BJ (cell line): ENCODE measurements at regions of chr2 and their contacts with region 1.

Region 1: GRCh38 chr2:70616168-70616694 is 62.6 kb upstream of the TGFA start:
- DNase-seq: no peak
- H3K4me3 ChIP-seq: no peak overlapping the region
- H3K27me3 ChIP-seq: peaks cover 5% of the 10 kb centered on the region
- CTCF ChIP-seq: no peak

Region 2: DNA sequence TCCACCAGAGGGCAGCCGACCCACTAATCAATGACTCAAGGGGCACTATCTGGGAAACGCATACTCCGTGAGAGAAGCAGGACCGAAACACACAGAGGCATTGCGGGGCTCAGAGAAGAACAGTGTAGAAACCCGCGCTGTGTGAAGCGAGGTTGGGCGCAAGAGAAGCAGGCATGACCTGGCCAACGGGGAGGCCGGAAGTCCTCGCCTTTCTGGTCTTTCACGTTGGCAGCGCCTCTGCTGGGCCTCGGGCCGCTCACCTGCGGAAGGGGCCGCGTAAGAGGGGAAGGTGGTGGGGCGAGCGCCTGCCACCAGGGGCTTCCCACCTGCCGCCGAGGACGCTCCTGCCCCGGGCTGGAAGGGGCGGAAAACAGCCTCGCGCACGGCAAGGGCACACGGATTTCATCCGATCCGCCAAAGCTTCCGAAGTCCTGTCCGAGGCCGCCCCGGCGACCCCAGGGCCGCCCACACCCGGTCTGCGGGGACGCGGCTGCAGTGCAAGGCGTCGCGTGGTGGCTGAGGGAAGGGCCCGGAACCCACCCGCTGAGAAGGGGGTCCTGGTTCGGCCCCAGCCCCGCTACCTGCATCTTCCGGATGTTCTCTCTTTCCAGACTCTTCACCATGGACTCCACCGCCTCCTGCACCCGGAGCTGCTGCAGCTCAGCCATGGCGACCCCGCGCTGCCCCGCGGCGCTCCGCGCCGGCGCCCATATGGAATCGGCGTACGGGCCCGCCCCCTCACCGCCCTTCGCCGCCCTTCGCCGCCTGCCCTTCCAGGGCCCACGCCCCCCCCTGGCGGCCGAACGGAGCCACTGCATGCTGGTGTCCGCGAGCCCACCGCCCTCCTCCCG is 314.7 kb before region 1 on chr2 and contains the start of gene FAM136A:
- CTCF ChIA-PET with region 1: interaction called, 89 read pairs
- POLR2A ChIA-PET with region 1: no interaction called
- DNase-seq: no peak
- H3K4me3 ChIP-seq: peak within 1 kb of the TSS; percentile 97
- H3K27me3 ChIP-seq: no peaks in the 10 kb centered on the region
- CTCF ChIP-seq: peak; percentile 87
- polyA plus RNA-seq, gene FAM136A: 22.9 and 28.3 TPM in 2 replicates

Region 3: GRCh38 chr2:70456585-70457495 is 159.4 kb before region 1 on chr2:
- CTCF ChIA-PET with region 1: no interaction called
- POLR2A ChIA-PET with region 1: interaction called, 11 read pairs
- DNase-seq: no peak
- H3K4me3 ChIP-seq: no peak overlapping the region
- H3K27me3 ChIP-seq: no peaks in the 10 kb centered on the region; the same call in 1 of the 2 replicates
- CTCF ChIP-seq: no peak

Region 4: GRCh38 chr2:70523996-70524965 is 92.0 kb before region 1 on chr2:
- CTCF ChIA-PET with region 1: no interaction called
- POLR2A ChIA-PET with region 1: no interaction called
- DNase-seq: peak; percentile 41
- H3K4me3 ChIP-seq: no peak overlapping the region
- H3K27me3 ChIP-seq: no peaks in the 10 kb centered on the region
- CTCF ChIP-seq: no peak

Region 5: DNA sequence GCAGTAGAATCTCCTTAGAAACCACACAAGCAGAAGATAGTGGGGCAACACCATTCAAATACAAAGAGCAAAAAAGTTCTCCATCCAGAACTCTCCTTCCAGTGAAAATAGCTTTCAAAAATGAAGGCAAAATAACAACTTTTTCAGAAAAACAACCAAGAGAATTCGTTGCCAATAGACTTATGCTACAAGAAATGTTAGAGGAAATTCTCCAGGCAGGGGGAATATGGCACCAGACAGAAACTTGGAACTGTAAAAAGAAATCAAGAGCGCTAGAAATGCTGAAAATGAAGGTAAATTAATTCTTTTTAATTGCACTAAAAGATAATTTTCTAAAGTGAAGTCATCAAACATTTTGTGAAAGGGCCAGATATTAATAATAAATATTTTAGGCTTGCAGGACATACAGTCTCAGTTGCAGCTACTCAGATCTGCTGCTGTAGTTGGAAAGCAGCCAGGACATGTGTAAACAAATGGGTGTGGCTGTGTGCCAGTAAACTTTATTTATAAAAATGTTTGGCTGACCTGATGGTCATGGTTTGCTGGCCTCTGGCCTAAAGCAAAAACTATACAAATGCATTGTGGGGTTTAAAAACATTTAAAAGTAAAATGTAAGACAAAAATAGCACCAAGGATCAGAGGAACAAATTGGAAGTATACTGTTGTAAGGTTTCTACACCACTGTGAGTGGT is 11.1 kb after region 1 on chr2:
- CTCF ChIA-PET with region 1: interaction called, 14 read pairs
- POLR2A ChIA-PET with region 1: no interaction called
- DNase-seq: no peak
- H3K4me3 ChIP-seq: no peak overlapping the region
- H3K27me3 ChIP-seq: peaks cover 6% of the 10 kb centered on the region
- CTCF ChIP-seq: no peak

Region 6: DNA sequence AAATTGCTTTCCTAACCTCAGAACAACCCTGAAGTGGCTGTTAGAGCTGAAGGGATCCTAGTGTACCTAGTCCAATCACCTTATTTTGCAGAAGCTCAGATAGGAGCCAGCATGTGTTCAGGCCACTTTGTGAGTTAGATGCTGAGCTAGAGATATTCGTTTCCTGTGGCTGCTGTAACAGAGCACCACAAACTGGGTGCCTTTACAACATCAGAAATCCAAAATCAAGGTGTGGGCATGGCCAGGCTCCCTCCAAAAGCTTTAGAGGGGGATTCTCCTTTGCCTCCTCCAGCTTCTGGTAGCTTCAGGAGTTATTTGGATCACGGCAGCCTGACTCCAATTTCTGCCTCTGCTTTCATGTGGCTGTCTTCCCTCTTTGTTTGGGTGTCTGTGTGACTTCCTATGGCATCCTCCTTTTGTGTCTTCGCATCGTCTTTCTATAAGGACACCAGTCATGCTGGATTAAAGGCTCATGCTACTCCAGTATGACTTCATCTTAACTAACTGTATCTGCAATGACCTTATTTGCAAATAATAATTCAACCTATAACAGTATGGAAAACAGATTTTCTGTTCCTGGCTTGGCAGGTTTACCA is 23.7 kb after region 1 on chr2:
- CTCF ChIA-PET with region 1: interaction called, 32 read pairs
- POLR2A ChIA-PET with region 1: no interaction called
- DNase-seq: no peak
- H3K4me3 ChIP-seq: no peak overlapping the region
- H3K27me3 ChIP-seq: peaks cover 3% of the 10 kb centered on the region; the same call in 1 of the 2 replicates
- CTCF ChIP-seq: no peak

Region 7: DNA sequence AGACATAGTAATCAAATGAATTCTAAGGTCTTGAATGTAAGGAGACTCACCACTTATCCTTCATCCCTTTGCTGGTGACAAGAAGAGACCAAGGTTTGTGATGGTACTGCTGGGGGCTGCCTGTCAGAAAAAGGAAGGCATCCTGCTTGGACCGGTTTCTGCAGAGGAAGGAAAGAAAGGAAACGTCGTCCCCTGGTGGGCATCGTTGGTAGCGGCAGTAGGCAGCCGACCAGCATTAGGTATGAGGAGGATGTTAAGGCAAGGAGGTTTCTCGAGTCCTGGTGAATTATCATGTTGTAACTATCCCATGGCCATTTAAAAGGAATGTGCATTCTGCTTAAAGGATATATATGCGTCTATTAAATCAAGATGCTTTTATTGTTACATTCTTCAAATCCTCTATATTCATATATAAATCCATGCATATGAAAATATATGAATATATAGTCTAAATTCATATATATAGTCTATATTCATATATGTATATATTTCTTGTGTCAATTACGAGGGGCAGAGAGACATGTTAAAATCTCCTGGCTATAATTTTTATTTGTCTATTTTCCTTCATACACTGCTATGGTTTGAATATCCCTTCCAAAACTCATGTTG is 31.7 kb after region 1 on chr2:
- CTCF ChIA-PET with region 1: interaction called, 23 read pairs
- POLR2A ChIA-PET with region 1: no interaction called
- DNase-seq: peak; percentile 3
- H3K4me3 ChIP-seq: no peak overlapping the region
- H3K27me3 ChIP-seq: no peaks in the 10 kb centered on the region
- CTCF ChIP-seq: peak; percentile 100

Region 8: DNA sequence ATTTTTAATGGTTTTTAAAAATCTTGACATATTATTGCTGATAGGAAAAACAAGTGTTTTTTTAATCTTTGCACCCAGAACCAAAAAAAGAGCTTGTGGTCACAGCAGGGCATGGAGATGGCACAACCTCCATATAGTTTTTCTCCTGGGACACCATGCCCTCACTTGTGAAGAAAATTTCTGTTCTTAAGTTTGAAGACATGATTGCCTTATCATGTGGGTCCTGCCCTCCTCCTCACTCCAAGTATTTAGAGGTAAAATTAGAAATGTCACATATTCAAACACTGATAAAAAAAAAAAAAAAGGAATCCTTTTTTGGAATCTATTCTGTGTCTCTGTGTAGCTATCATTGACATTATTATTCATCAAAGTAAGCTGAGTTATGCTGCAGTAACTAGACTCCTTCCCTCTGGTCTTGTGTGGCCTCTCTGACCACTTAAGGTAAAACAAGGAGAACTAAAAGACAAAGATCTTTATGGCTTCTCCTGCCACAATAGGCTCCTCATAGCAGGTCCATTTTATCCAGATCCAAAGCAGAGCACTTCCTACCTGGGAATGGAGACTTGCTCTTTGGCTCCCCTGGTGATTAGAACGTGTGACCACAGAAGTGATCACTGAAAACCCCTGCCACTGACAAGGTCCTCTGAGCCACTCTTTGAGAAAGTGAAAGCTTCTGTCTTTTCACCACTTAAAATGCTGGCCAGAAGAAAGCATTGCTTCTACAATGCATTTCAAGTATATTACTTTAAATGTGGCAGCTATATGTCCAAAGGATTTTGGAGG is 132.0 kb after region 1 on chr2:
- CTCF ChIA-PET with region 1: no interaction called
- POLR2A ChIA-PET with region 1: no interaction called
- DNase-seq: no peak
- H3K4me3 ChIP-seq: no peak overlapping the region
- H3K27me3 ChIP-seq: 0 out of 2 replicates have a peak, but pooled peaks cover 2% of the 10 kb centered on the region
- CTCF ChIP-seq: no peak

Region 9: GRCh38 chr2:71018625-71019024 is 402.4 kb after region 1 on chr2:
- CTCF ChIA-PET with region 1: no interaction called
- POLR2A ChIA-PET with region 1: no interaction called
- DNase-seq: no peak
- H3K4me3 ChIP-seq: no peak overlapping the region
- H3K27me3 ChIP-seq: no peaks in the 10 kb centered on the region
- CTCF ChIP-seq: no peak